ENCODE measurements at regions of chr12 and their contacts with region 1.

Region 1: DNA sequence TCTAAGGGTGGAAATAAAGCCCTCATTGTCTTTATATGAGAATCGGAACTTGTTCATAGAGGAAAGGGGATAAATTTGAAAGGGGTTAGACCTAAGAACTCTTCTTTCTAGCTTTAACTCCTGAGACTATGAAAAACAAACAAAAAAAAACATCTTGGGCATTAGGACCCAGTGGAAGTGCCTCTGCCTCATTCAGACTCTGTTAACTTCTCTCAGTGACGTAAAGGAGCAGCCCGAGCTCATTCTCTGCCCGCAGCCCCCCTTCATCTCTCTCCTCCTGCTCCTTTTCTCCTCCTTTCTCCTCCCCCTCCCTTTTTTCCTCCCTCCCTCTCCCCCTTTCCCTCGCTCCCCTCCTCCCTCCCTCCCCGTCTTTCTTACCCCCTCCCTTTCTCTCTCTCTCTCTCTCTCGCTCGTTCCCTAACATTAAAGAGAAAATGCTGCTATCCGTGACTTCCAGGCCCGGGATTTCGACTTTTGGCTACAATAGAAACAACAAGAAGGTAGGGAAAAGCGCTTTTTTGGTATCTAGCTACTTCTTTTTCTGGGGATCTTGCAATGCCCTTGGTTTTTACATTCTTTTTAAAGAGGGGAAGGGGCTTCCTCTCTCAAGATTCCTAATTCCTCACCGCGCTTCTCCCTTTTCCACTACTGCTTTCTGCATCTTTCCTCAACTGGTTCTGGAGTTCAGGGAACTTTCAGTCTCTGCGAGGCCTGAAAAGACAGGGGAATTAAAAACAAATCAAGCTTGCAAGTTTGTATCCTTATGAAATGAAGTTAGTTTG is at the start of gene RBMS2:
- DNase-seq: peak; percentile 86
- H3K4me3 ChIP-seq: peak within 1 kb of the TSS; percentile 52 to 96 (median 89)
- H3K27ac ChIP-seq: peak within 1 kb of the TSS; percentile 83
- H3K4me1 ChIP-seq: peaks cover 43% of the 10 kb centered on the region
- H3K27me3 ChIP-seq: no peaks in the 10 kb centered on the region
- CTCF ChIP-seq: no peak
- total RNA-seq, gene RBMS2: 18.7 to 70.4 TPM

Region 2: DNA sequence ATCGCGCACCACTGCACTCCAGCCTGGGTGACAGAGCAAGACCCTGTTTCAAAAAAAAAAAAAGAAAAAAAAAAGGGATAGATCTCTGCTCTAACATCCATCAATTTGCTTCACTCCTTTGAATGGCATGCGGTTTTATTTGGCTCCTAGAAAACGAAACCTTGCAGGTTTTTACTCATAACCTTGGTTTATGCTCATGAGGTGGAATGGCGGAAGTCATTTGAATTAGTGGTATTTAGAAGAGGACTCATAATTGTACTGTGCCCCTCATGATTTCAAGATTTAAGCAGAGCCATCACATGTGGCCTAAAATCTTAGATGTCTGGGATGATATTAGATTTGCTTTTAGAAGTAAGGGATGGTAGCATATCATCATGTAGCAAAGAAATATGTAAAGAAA is 29.3 kb after region 1 on chr12:
- CTCF ChIA-PET with region 1: no interaction called
- dilution Hi-C with region 1: no loop called
- in situ Hi-C with region 1: no loop called
- intact Hi-C with region 1: no loop called
- DNase-seq: no peak
- H3K4me3 ChIP-seq: no peak overlapping the region
- H3K27ac ChIP-seq: no peak overlapping the region
- H3K4me1 ChIP-seq: no peaks in the 10 kb centered on the region
- H3K27me3 ChIP-seq: no peaks in the 10 kb centered on the region
- CTCF ChIP-seq: no peak

Region 3: DNA sequence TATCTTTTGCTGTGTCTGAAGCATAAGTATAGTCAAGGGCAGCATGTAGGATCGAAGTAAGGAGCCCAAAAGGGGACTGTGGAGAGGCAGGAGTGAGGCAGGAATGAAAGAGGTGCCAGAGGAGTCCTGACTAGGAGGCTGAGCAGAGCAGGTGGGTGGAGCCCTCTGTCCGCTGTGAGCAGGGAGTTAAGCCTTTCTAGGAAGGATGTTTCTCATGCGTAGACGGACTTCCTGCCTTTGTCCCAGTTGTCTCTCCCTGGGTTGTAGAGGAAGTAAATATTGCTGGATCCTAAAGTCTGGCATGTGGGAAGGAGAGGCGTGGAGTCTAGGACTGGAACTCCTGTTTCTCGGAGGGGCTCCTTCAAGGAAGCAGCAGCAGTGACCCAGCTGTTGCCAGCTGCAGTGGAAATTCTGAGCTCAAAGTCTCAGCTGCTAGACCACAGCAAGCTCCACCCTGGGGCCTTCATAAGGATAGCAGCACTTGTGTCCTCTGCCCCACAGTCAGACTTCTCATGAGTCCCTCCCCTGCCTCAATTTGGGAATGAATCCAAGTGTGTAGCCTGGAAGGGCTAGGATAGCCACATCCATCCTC is 43.8 kb after region 1 on chr12:
- CTCF ChIA-PET with region 1: no interaction called
- dilution Hi-C with region 1: no loop called
- in situ Hi-C with region 1: loop called (anchors 5 to 10 kb)
- intact Hi-C with region 1: no loop called
- DNase-seq: no peak
- H3K4me3 ChIP-seq: no peak overlapping the region
- H3K27ac ChIP-seq: no peak overlapping the region
- H3K4me1 ChIP-seq: peaks cover 10% of the 10 kb centered on the region
- H3K27me3 ChIP-seq: no peaks in the 10 kb centered on the region
- CTCF ChIP-seq: no peak

Region 4: GRCh38 chr12:56571126-56571525 is 49.3 kb after region 1 on chr12:
- CTCF ChIA-PET with region 1: no interaction called
- dilution Hi-C with region 1: no loop called
- in situ Hi-C with region 1: loop called (anchors 5 to 10 kb)
- intact Hi-C with region 1: no loop called
- DNase-seq: no peak
- H3K4me3 ChIP-seq: no peak overlapping the region
- H3K27ac ChIP-seq: no peak overlapping the region
- H3K4me1 ChIP-seq: peaks cover 16% of the 10 kb centered on the region
- H3K27me3 ChIP-seq: no peaks in the 10 kb centered on the region
- CTCF ChIP-seq: no peak

Region 5: DNA sequence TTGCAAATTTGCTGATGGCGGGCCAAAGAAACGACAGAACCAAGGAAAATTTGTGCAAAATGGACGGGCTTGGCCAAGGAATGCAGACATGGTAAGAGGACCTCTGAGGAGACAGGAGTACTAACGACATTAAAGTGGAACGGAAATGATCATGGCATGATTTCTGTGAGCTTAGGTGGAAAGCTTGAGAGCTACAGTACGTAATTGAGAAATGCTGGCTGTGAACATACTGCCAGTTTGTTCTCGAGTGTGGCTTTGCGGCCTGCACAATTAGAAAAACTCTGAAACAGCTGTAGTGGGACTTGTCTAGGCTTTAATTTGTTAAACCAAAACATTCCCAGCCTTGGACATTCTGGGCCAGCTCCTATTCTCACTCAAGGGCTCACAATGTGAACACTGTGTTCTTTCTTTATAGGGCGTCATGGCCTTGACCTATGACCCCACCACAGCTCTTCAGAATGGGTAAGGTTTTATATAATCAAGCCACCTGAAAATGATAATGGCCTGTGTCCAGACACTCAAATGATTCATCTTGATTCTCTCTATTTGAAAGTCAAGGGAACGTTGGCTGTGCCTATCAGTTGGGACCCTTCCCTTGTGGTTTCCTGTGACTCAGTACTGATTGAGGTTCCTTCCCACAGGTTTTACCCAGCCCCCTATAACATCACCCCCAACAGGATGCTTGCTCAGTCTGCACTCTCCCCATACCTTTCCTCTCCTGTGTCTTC is 59.8 kb after region 1 on chr12:
- CTCF ChIA-PET with region 1: no interaction called
- dilution Hi-C with region 1: loop called (anchors 5 kb)
- in situ Hi-C with region 1: loop called in 1 of 2 experiments (anchors 10 kb)
- intact Hi-C with region 1: no loop called
- DNase-seq: peak; percentile 81
- H3K4me3 ChIP-seq: no peak overlapping the region
- H3K27ac ChIP-seq: no peak overlapping the region
- H3K4me1 ChIP-seq: peaks cover 20% of the 10 kb centered on the region
- H3K27me3 ChIP-seq: no peaks in the 10 kb centered on the region
- CTCF ChIP-seq: no peak

Region 6: GRCh38 chr12:56628671-56629458 is 107.1 kb after region 1 on chr12:
- CTCF ChIA-PET with region 1: interaction called, 12 read pairs
- dilution Hi-C with region 1: no loop called
- in situ Hi-C with region 1: loop called in 1 of 2 experiments (anchors 10 kb)
- intact Hi-C with region 1: no loop called
- DNase-seq: peak; percentile 60
- H3K4me3 ChIP-seq: peak overlapping the region; percentile 53 to 80 (median 75)
- H3K27ac ChIP-seq: peak overlapping the region; percentile 40
- H3K4me1 ChIP-seq: peaks cover 36% of the 10 kb centered on the region
- H3K27me3 ChIP-seq: no peaks in the 10 kb centered on the region
- CTCF ChIP-seq: no peak